ENCODE measurements at regions of chr7 and their contacts with region 1.

Region 1: GRCh38 chr7:125820495-125820894 is 890.9 kb upstream of the POT1 start:
- DNase-seq: no peak
- ATAC-seq: no peak
- H3K4me3 ChIP-seq: no peak overlapping the region
- H3K27ac ChIP-seq: no peak overlapping the region
- H3K4me1 ChIP-seq: no peaks in the 10 kb centered on the region
- H3K27me3 ChIP-seq: no peaks in the 10 kb centered on the region
- CTCF ChIP-seq: no peak
- EP300 ChIP-seq: no peak
- POLR2A ChIP-seq: no peak
- RAD21 ChIP-seq: no peak

Region 2: GRCh38 chr7:125892434-125892833 is 71.9 kb after region 1 on chr7:
- CTCF ChIA-PET with region 1: no interaction called
- POLR2A ChIA-PET with region 1: no interaction called
- RAD21 ChIA-PET with region 1: no interaction called
- SMC1A ChIA-PET with region 1: no interaction called
- in situ Hi-C with region 1: no loop called
- intact Hi-C with region 1: loop called (anchors 5 kb)
- DNase-seq: no peak
- ATAC-seq: no peak; the same call in 2 of the 3 replicates
- H3K4me3 ChIP-seq: no peak overlapping the region
- H3K27ac ChIP-seq: no peak overlapping the region
- H3K4me1 ChIP-seq: no peaks in the 10 kb centered on the region
- H3K27me3 ChIP-seq: no peaks in the 10 kb centered on the region
- CTCF ChIP-seq: no peak
- EP300 ChIP-seq: no peak
- POLR2A ChIP-seq: no peak
- RAD21 ChIP-seq: no peak

Measured in GM12878 (cell line).